Activated naive CD4-positive, alpha-beta T cell treated with anti-CD3 and anti-CD28 coated beads, Interleukin-2, amount 10 ng/mL, durations not matched to agents 7 days and 5 days (primary cell): ENCODE measurements at regions of chr14 and their contacts with region 1.

Region 1: GRCh38 chr14:88189417-88190191 is 133.5 kb downstream of the KCNK10 start:
- DNase-seq: peak; percentile 77
- H3K4me3 Mint-ChIP-seq: no peak overlapping the region
- H3K27ac Mint-ChIP-seq: no peak overlapping the region
- H3K4me1 Mint-ChIP-seq: peaks cover 4% of the 10 kb centered on the region
- H3K27me3 Mint-ChIP-seq: peaks cover 19% of the 10 kb centered on the region

Region 2: GRCh38 chr14:87944987-87945604 is 244.5 kb before region 1 on chr14:
- CTCF ChIA-PET with region 1: interaction called, 12 read pairs
- DNase-seq: no peak
- H3K4me3 Mint-ChIP-seq: no peak overlapping the region
- H3K27ac Mint-ChIP-seq: no peak overlapping the region
- H3K4me1 Mint-ChIP-seq: no peaks in the 10 kb centered on the region
- H3K27me3 Mint-ChIP-seq: no peaks in the 10 kb centered on the region

Region 3: DNA sequence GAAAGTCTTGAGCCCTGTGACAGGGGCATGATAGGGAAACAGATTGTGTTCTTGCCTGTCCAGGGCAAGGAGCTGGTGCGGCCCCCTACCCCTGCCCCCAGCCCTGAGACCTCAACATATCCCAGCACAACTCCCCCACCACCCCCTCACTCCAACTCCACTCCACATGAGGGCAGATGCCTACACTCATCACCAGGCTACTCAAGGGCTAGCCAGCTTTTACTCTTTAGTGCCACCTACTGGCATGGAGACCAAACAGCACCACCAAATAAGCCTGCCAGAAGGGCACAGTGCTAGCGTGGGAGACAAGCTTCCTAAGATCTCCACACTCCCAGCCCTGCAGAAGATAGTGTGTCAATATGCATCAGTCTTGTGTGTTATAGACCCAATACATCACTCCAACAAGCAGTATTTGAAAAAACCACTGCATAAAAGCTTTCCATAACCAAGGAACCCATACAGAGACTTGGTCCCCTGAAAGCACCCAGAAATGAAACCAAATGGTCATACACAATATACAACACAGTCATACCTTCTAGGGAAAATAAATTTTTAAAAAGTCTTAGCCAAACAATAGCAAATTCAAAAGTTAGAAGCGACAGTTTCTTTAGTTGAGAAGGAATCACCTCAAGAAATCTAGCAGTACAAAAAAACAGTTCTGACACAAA is 21.0 kb before region 1 on chr14:
- CTCF ChIA-PET with region 1: interaction called, 21 read pairs
- DNase-seq: peak; percentile 66
- H3K4me3 Mint-ChIP-seq: no peak overlapping the region
- H3K27ac Mint-ChIP-seq: no peak overlapping the region
- H3K4me1 Mint-ChIP-seq: peaks cover 7% of the 10 kb centered on the region
- H3K27me3 Mint-ChIP-seq: peaks cover 31% of the 10 kb centered on the region

Region 4: DNA sequence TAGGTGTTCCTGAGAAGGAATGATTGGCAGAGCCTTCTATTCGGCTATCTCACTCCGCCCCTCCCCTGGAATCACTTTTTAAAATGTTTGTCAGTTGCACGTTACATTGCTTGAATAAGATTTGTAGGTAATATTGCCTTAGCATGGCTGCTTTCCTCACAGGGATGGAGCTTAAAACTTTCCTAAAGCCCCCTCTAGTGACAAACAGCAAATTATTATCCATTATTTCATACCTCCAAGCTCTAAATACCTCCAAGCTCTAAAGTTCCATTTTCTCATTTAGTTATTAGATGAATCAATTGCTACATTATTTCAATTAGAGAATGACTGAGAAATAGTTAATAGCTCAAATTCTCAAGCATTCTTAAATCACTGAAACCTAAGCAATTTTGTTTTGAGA is 190.8 kb after region 1 on chr14:
- CTCF ChIA-PET with region 1: interaction called, 11 read pairs
- DNase-seq: no peak
- H3K4me3 Mint-ChIP-seq: no peak overlapping the region
- H3K27ac Mint-ChIP-seq: no peak overlapping the region
- H3K4me1 Mint-ChIP-seq: peaks cover 17% of the 10 kb centered on the region
- H3K27me3 Mint-ChIP-seq: peaks cover 18% of the 10 kb centered on the region